Mammary epithelial cell (primary cell): ENCODE measurements at regions of chr7 and their contacts with region 1.

Region 1: GRCh38 chr7:42107484-42108245 is 129.3 kb downstream of the GLI3 start:
- DNase-seq: no peak
- H3K4me3 ChIP-seq: no peak overlapping the region
- H3K27ac ChIP-seq: no peak overlapping the region
- H3K4me1 ChIP-seq: peaks cover 43% of the 10 kb centered on the region
- H3K27me3 ChIP-seq: no peaks in the 10 kb centered on the region
- CTCF ChIP-seq: no peak

Region 2: DNA sequence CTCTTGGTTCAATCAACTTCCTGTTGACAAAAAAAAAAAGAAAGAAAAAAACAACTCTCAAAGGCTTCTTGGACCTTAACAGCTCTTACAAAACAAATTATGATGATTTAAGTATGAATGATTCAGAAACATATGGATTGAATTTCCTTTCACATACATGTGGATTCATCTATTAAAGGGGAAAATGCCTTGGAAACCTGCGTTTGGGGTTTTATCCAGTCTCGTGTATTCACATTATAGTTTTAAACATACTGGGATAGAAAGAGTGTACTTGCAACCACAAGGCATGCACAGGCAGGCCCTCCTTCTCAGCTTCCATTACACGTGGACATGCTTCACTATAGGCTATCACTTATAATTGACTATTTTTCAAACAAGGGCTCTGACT is 691.5 kb before region 1 on chr7:
- CTCF ChIA-PET with region 1: no interaction called
- dilution Hi-C with region 1: no loop called
- in situ Hi-C with region 1: no loop called
- intact Hi-C with region 1: no loop called
- DNase-seq: peak; percentile 50
- H3K4me3 ChIP-seq: no peak overlapping the region
- H3K27ac ChIP-seq: peak overlapping the region; percentile 51
- H3K4me1 ChIP-seq: peaks cover 12% of the 10 kb centered on the region
- H3K27me3 ChIP-seq: no peaks in the 10 kb centered on the region
- CTCF ChIP-seq: no peak

Region 3: DNA sequence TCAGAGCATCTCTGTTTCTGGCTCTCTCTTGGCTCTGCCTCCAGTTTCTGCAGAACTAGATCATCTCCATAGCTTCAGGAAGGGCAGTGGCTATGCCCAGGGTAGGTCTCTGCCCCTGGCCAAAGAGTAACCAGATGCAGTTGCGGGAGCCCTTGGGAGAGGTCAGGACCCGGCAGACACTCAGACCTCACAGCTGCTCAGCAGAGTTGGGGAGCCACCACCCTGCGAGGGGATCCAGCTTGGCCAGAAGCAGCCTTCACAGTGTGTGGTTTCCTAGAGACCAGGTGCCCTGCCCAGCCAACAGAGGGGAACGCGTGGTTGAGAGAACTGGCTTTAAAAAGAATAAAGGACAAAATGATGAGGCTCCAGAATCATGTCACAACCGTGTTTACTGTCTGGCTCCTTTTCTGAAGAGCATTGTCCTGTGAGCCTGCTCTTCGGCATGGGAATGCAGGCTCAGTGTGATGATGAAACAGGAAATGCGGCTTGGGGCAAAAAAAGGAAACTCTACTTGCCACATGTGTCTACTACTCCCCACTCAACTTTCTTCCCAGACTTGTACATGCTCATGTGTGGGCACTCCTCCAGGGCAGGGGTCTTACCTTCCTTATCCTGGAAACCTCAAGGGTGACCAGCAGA is 647.9 kb before region 1 on chr7:
- CTCF ChIA-PET with region 1: no interaction called
- dilution Hi-C with region 1: no loop called
- in situ Hi-C with region 1: no loop called
- intact Hi-C with region 1: no loop called
- DNase-seq: no peak
- H3K4me3 ChIP-seq: no peak overlapping the region
- H3K27ac ChIP-seq: no peak overlapping the region
- H3K4me1 ChIP-seq: peaks cover 4% of the 10 kb centered on the region
- H3K27me3 ChIP-seq: no peaks in the 10 kb centered on the region
- CTCF ChIP-seq: no peak

Region 4: GRCh38 chr7:42414941-42415505 is 307.4 kb after region 1 on chr7:
- CTCF ChIA-PET with region 1: interaction called, 17 read pairs
- dilution Hi-C with region 1: no loop called
- in situ Hi-C with region 1: no loop called
- intact Hi-C with region 1: no loop called
- DNase-seq: peak; percentile 19
- H3K4me3 ChIP-seq: no peak overlapping the region
- H3K27ac ChIP-seq: no peak overlapping the region
- H3K4me1 ChIP-seq: peaks cover 20% of the 10 kb centered on the region
- H3K27me3 ChIP-seq: no peaks in the 10 kb centered on the region
- CTCF ChIP-seq: no peak